Activated T-helper 2 cell treated with anti-CD3 and anti-CD28 coated beads, Interferon-gamma antibody, Interleukin-2, Interleukin-4, amounts not matched to agents 10 μg/mL and 5 μg/mL and 100 μg/mL, durations not matched to agents 14 hours and 24 hours and 36 hours (primary cell): ENCODE measurements at regions of chr1 and their contacts with region 1.

Region 1: GRCh38 chr1:151839457-151840405 is at the start of gene C2CD4D:
- DNase-seq: peak; percentile 67
- H3K4me3 Mint-ChIP-seq: peak within 1 kb of the TSS; percentile 78
- H3K27ac Mint-ChIP-seq: peak within 1 kb of the TSS; percentile 80
- H3K4me1 Mint-ChIP-seq: peaks cover 37% of the 10 kb centered on the region
- H3K27me3 Mint-ChIP-seq: no peaks in the 10 kb centered on the region
- total RNA-seq, gene C2CD4D: 1.3 and 1.6 TPM in 2 replicates

Region 2: DNA sequence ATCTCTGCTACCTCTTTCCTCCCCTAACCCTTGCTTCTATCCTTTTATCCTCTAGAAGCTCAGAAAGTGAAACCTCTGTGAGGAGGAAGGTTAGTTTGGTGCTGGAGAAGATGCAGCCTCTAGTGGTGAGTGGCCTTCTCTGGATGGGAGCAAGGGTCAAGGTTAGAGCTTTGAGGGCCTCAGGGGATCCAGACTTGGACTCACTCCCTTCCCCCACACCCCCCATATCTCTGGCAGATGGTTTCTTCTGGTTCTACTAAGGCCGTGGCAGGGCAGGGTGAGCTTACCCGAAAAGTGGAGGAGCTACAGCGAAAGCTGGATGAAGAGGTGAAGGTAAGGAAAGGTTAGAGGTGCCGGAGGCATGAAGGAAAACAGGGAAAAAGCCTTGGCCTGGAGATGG is 319.4 kb before region 1 on chr1:
- intact Hi-C with region 1: no loop called
- DNase-seq: no peak
- H3K4me3 Mint-ChIP-seq: no peak overlapping the region
- H3K27ac Mint-ChIP-seq: no peak overlapping the region
- H3K4me1 Mint-ChIP-seq: no peaks in the 10 kb centered on the region
- H3K27me3 Mint-ChIP-seq: peaks cover 1% of the 10 kb centered on the region

Region 3: GRCh38 chr1:151534665-151535278 is 305.0 kb before region 1 on chr1:
- intact Hi-C with region 1: loop called (anchors 2 kb)
- DNase-seq: peak; percentile 66
- H3K4me3 Mint-ChIP-seq: no peak overlapping the region
- H3K27ac Mint-ChIP-seq: no peak overlapping the region
- H3K4me1 Mint-ChIP-seq: peaks cover 3% of the 10 kb centered on the region
- H3K27me3 Mint-ChIP-seq: no peaks in the 10 kb centered on the region

Region 4: GRCh38 chr1:151720974-151721787 is 118.5 kb before region 1 on chr1 and contains the start of gene RIIAD1:
- intact Hi-C with region 1: loop called (anchors 5 kb)
- DNase-seq: peak; percentile 20
- H3K4me3 Mint-ChIP-seq: peak within 1 kb of the TSS; percentile 70
- H3K27ac Mint-ChIP-seq: no peak within 1 kb of the TSS
- H3K4me1 Mint-ChIP-seq: peaks cover 19% of the 10 kb centered on the region
- H3K27me3 Mint-ChIP-seq: peaks cover 72% of the 10 kb centered on the region
- total RNA-seq, gene RIIAD1: not detected in 2 replicates

Region 5: DNA sequence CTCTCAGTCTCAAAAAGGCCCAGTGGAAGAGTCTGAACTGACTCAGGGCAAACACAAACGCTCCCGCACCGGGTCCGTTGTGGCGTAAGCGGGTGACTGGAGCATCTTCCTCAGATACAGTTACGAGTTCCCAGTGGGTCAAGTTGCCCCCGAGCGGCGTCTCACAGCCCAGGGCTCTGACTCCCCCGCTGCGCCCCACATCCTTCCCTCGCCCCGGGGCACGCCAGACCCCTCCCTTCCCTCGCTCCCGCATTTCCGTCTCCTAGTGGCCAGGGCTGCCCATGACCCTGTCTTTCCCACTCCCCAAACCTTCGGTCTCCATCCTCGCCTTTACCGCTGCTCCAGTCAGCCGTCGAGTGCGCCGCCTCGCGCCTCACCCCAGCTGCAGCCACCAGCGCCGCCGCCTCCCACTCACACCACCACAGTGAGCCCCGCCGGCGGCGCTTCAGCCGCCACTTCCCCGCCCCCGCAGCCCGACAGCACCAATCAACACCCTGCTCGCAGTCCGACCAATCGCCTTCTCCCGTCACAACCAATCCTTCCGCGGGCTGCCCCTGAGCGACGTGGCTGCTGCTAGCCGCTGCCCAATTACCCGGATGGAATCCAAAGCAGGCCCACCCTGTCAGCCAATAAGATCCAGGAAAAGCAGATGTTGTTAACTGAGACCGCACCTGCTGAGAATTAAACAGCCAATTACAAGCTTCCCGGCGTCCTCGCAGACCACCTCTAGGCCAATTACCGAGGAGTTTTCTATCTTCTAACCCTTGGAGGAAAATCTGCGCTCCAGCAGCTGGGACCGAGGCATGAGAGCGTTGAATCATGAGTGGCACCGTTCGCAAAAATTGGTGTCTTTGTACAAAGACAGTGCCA is 49.4 kb before region 1 on chr1 and contains the start of gene TDRKH:
- intact Hi-C with region 1: loop called (anchors 5 kb)
- DNase-seq: peak; percentile 99
- H3K4me3 Mint-ChIP-seq: peak within 1 kb of the TSS; percentile 99
- H3K27ac Mint-ChIP-seq: peak within 1 kb of the TSS; percentile 91
- H3K4me1 Mint-ChIP-seq: peaks cover 24% of the 10 kb centered on the region
- H3K27me3 Mint-ChIP-seq: peaks cover 1% of the 10 kb centered on the region
- total RNA-seq, gene TDRKH: 18.2 and 18.4 TPM in 2 replicates

Region 6: DNA sequence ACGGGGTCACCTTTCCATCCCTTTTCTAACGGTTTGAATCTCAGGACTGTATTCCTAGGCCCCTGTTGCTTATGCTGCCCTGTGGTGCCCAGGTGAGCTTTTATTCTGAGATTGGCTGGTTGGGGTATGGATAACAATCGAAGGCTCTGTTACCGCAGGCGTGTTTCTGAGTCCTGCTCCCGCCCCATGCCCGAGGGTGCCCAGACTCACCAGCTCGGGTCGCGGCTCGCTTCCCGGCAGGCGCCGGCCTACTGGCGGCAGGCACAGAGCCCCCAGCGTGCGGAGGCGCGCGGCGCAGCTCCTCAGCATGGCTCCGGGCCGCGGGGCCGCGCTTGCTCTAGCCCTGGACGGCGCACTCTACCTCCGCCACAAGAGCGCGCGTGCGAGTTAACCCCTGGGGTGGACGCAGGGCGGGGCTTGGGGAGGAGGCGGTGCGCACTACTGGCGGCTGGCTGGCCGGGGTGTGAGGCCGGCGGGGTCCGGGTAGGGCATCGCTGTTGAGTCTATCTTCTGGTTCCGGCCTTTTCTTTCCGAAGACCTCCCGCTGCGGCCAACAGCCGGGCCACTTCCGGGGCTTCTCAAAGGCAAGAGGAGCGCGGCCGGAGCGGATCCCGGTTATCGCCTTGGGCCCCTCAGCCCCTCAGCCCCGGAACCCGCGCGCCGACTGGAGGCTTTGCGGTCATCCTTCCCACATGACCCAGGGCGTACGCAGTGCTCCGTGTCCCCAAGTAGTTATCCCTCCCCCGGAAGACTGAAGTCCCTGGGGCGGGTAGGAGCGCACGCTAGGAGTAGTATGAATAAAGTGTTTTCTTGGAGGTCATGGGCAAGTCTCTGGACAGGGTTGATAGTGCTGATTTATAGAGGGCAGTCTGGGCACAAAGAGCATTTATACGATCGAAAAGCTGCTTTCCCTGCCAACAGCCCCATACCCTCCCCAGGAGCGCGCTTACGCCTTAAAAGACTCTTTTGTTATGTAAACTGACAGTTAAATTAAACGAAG is 69.7 kb after region 1 on chr1 and contains the start of gene THEM4:
- intact Hi-C with region 1: loop called (anchors 10 kb)
- DNase-seq: peak; percentile 88
- H3K4me3 Mint-ChIP-seq: peak within 1 kb of the TSS; percentile 80
- H3K27ac Mint-ChIP-seq: peak within 1 kb of the TSS; percentile 90
- H3K4me1 Mint-ChIP-seq: peaks cover 29% of the 10 kb centered on the region
- H3K27me3 Mint-ChIP-seq: peaks cover 2% of the 10 kb centered on the region
- total RNA-seq, gene THEM4: 27.2 and 28.0 TPM in 2 replicates

Region 7: DNA sequence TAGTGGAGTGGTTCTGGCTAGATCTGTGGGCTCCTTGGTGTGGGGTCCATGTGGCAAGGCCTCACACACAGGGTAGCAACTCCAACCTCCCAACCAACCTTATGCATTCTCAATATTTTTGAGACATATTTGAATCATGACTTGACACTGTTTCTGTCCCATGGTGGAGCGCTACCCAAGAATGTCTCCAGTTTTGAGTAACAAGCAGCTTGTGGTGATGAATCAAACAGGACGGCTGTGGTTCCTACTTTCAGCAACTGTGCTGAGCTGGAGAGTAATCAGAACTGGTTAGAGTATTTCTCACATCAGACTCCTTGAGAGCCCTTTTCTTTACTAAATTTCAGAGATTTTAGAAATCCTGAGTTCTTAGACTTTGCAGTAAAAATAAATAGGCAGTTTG is 737.4 kb after region 1 on chr1:
- intact Hi-C with region 1: no loop called
- DNase-seq: no peak
- H3K4me3 Mint-ChIP-seq: no peak overlapping the region
- H3K27ac Mint-ChIP-seq: no peak overlapping the region
- H3K4me1 Mint-ChIP-seq: peaks cover 8% of the 10 kb centered on the region
- H3K27me3 Mint-ChIP-seq: peaks cover 13% of the 10 kb centered on the region